SK-N-SH (cell line): ENCODE measurements at regions of chr5 and their contacts with region 1.

Region 1: GRCh38 chr5:58849921-58850667 is 267.2 kb downstream of the RAB3C start:
- DNase-seq: peak; percentile 49
- H3K4me3 ChIP-seq: no peak overlapping the region
- H3K27ac ChIP-seq: peak overlapping the region in 1 of 2 experiments; percentile 93; a peak in 2 of 4 replicates
- H3K4me1 ChIP-seq: peaks cover 0 to 11% of the 10 kb centered on the region in 2 experiments; a peak in 2 of 4 replicates
- H3K27me3 ChIP-seq: 0 out of 2 replicates have a peak, but pooled peaks cover 8% of the 10 kb centered on the region
- CTCF ChIP-seq: peak; percentile 59
- EP300 ChIP-seq: peak in 1 of 2 experiments; percentile 24; a peak in 1 of 4 replicates
- RAD21 ChIP-seq: peak; percentile 85

Region 2: DNA sequence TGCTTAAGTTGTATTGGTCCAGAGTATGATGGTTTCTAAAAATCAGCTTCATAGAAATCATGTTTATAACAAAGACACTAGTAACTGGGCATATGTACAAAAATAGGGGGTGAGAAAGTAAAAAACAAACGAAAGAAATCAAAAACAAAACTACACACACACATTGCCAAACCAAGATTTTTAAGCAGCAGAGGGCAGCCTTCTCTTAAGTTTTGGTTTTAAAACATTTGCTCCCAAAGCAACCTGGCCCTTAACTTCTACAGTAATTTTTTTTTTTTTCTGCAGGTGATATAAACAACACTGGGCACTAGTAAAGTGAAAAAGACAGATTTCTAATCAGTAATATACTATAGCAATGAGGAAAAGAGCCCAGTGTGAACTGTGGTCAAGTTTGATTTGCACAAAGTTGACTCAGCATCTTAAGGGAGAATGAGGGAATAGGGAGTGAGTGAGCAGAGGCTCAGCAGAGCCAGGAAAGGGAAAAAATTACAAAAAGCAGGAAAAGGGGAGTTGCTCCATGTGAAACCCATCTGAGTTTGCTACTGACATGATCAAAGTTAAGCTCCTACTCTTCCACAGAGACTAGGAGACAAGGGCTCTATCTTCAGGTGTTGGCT is 372.2 kb before region 1 on chr5:
- CTCF ChIA-PET with region 1: interaction called, 55 read pairs
- POLR2A ChIA-PET with region 1: no interaction called
- DNase-seq: no peak
- H3K4me3 ChIP-seq: no peak overlapping the region
- H3K27ac ChIP-seq: no peak overlapping the region
- H3K4me1 ChIP-seq: no peaks in the 10 kb centered on the region
- H3K27me3 ChIP-seq: no peaks in the 10 kb centered on the region
- CTCF ChIP-seq: peak; percentile 43
- EP300 ChIP-seq: no peak
- RAD21 ChIP-seq: peak; percentile 65

Region 3: DNA sequence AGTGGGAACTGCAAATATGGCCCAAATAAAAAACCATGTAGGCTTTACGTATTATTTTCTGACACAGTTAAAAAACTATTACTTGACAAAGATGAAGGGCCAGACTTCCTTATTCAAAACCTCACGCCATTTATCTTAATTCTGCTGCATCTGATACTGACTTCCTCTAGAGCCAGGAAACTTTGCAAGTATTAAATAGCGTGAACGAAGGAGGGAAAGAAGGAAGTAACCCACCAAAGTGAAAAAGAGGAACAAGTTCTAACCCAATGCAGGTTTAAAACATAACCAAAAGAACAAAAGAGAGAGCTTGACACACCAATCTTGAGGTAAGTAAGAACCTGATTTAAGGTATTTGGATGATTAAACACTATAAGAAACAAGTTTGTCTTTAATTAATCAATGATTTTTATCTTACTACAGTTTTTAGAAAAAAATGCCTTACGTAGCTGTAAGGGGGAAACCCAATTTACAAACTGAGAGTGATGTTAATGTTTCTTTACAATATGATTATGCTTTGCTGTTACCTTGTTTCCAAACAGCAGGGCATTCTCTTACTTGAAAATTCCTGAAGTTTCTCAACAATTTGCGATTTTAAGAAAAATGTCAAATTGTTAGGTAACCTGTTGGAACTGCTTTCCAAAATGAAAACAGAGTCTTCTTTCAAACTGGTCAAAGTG is 358.7 kb before region 1 on chr5 and contains the start of gene GAPT:
- CTCF ChIA-PET with region 1: interaction called, 100 read pairs
- POLR2A ChIA-PET with region 1: no interaction called
- DNase-seq: no peak
- H3K4me3 ChIP-seq: no peak within 1 kb of the TSS
- H3K27ac ChIP-seq: no peak within 1 kb of the TSS
- H3K4me1 ChIP-seq: no peaks in the 10 kb centered on the region; a peak in 1 of 4 replicates
- H3K27me3 ChIP-seq: no peaks in the 10 kb centered on the region
- CTCF ChIP-seq: no peak
- EP300 ChIP-seq: no peak
- RAD21 ChIP-seq: no peak
- polyA plus RNA-seq, gene GAPT: not detected in 2 replicates

Region 4: DNA sequence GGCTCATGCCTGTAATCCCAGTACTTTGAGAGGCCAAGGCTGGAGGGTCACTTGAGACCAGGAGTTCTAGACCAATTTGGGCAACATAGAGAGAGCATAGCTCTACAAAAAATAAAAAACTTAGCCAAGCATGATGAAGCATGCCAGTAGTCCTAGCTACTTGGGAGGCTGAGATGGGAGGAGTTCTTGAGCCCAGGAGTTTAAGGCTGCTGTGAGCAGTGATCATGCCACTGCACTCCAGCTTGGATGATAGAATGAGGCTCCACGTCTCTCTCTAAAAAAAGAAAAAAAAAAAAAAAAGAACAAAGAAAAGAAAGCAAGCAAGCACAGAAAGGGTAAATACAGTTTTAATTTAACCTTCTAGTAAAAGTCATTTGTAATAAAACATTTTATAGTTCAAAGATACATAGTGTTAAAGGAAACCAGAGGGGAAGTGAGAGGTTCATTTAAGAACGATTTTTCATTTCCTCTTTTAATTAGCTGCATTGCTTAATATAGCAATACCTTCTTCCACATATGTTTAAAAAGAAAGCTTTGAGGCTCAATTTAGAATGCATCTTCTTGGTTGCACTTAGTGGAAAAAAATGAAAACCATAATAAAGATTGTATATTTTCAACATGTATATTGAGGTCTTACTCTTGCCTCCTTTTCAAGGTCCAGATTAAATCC is 344.0 kb before region 1 on chr5:
- CTCF ChIA-PET with region 1: interaction called, 100 read pairs
- POLR2A ChIA-PET with region 1: no interaction called
- DNase-seq: no peak
- H3K4me3 ChIP-seq: no peak overlapping the region
- H3K27ac ChIP-seq: no peak overlapping the region
- H3K4me1 ChIP-seq: no peaks in the 10 kb centered on the region
- H3K27me3 ChIP-seq: no peaks in the 10 kb centered on the region; the same call in 1 of the 2 replicates
- CTCF ChIP-seq: no peak
- EP300 ChIP-seq: no peak
- RAD21 ChIP-seq: no peak

Region 5: GRCh38 chr5:58818462-58818861 is 31.6 kb before region 1 on chr5:
- CTCF ChIA-PET with region 1: interaction called, 27 read pairs
- POLR2A ChIA-PET with region 1: no interaction called
- DNase-seq: no peak
- H3K4me3 ChIP-seq: no peak overlapping the region
- H3K27ac ChIP-seq: no peak overlapping the region; a peak in 1 of 4 replicates
- H3K4me1 ChIP-seq: peaks cover 0 to 9% of the 10 kb centered on the region in 2 experiments; a peak in 2 of 4 replicates
- H3K27me3 ChIP-seq: no peaks in the 10 kb centered on the region
- CTCF ChIP-seq: no peak
- EP300 ChIP-seq: no peak
- RAD21 ChIP-seq: no peak

Region 6: GRCh38 chr5:58834242-58835225 is 15.6 kb before region 1 on chr5:
- CTCF ChIA-PET with region 1: interaction called, 13 read pairs
- POLR2A ChIA-PET with region 1: no interaction called
- DNase-seq: no peak
- H3K4me3 ChIP-seq: no peak overlapping the region
- H3K27ac ChIP-seq: peak overlapping the region in 1 of 2 experiments; percentile 84; a peak in 2 of 4 replicates
- H3K4me1 ChIP-seq: peaks cover 0 to 18% of the 10 kb centered on the region in 2 experiments; a peak in 2 of 4 replicates
- H3K27me3 ChIP-seq: no peaks in the 10 kb centered on the region
- CTCF ChIP-seq: no peak
- EP300 ChIP-seq: peak in 1 of 2 experiments; percentile 59; a peak in 2 of 4 replicates
- RAD21 ChIP-seq: no peak

Region 7: GRCh38 chr5:58940446-58940845 is 90.4 kb after region 1 on chr5:
- CTCF ChIA-PET with region 1: no interaction called
- POLR2A ChIA-PET with region 1: no interaction called
- DNase-seq: no peak
- H3K4me3 ChIP-seq: no peak overlapping the region
- H3K27ac ChIP-seq: peak overlapping the region in 1 of 2 experiments; percentile 40; a peak in 1 of 4 replicates
- H3K4me1 ChIP-seq: no peaks in the 10 kb centered on the region
- H3K27me3 ChIP-seq: no peaks in the 10 kb centered on the region
- CTCF ChIP-seq: no peak
- EP300 ChIP-seq: no peak
- RAD21 ChIP-seq: no peak